Upper lobe of right lung (tissue), 1 donor: ENCODE measurements at regions of chr7 and their contacts with region 1.

Region 1: DNA sequence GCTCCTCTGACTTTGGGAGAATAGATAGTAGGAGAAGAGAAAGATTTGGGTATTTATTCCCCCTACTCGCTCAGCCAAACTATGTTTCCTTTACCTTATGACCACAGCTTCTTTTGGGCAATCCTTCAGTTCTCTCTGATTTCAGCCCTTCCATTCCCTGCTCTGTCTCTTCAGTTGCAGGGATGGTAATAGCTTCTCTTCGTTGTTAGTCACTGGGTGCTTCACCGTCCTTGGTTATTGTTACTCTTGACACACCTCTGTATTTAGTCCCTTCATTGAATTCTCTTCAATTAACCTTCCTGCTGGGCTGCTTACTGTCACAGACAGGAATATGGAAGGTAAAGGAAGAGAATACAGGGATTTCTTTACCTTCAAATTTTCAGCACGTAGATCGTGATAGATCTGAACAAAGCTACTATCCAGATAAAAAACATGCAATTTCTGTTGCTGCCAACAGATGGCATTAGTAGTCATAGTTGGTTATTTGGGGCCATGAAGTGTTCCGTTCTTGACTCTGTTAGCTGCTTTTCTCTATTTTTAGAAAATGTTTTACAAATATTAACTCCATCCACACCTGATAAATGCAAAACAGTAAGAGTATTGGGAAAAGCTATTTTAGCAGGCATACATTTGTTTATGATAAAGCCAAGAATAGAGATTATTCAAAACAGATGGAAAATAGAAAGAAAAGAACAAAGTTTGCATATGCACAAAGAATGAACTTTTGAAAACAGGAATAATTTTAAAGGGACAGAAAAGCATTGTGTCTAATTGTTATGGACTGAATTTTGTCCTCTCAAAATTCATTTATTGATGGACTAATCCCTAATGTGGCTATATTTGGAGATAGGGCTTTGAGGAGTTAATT is 14.0 kb upstream of the PTTG1IP2 start:
- DNase-seq: no peak
- ATAC-seq: peak; percentile 84
- H3K4me3 ChIP-seq: no peak overlapping the region
- H3K27ac ChIP-seq: no peak overlapping the region
- H3K4me1 ChIP-seq: no peaks in the 10 kb centered on the region
- H3K27me3 ChIP-seq: no peaks in the 10 kb centered on the region
- CTCF ChIP-seq: peak; percentile 68

Region 2: DNA sequence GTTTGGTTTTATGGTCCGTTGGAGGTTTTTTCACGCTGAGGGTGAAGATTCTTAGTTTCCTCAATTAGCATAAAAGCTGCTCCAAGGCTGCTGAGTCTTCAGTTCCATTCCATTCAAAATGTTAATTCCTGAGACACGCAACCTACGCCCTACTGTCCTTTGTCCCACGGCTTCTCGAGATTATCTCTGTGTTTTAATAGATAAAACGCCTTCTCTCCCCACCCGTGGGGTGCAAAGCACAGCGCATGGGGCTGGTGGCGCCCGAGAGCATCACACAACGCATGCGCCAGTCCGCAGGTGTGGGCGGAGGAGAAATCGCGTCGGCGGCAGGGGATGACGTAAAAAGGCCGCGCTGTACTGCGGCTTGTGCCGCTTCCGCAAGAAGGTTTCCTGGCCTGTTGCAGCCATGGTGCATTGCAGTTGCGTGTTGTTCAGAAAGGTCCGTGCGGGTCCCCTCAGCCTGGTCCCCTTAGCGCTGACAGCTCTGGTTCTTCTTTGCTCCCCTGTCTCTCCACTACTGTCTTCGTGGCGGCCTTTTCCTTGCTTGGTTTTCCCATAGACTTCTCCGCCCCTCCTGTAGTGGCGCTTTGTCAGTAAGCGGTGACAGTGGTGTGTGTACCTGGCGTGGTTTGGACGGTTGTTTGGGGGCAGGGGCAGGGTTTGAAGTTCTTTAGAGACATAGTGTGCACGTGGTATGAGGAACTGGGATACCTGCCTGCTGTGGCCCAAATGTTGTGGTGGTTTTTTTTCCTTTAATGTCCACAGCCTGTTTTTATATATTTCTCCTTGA is 108.9 kb before region 1 on chr7 and contains the start of gene GTPBP10:
- intact Hi-C with region 1: no loop called
- DNase-seq: peak; percentile 97
- ATAC-seq: peak; percentile 100
- H3K4me3 ChIP-seq: peak within 1 kb of the TSS; percentile 78
- H3K27ac ChIP-seq: peak within 1 kb of the TSS; percentile 93
- H3K4me1 ChIP-seq: peaks cover 9% of the 10 kb centered on the region
- H3K27me3 ChIP-seq: no peaks in the 10 kb centered on the region
- CTCF ChIP-seq: peak; percentile 80
- total RNA-seq, gene GTPBP10: 19.9 TPM

Region 3: DNA sequence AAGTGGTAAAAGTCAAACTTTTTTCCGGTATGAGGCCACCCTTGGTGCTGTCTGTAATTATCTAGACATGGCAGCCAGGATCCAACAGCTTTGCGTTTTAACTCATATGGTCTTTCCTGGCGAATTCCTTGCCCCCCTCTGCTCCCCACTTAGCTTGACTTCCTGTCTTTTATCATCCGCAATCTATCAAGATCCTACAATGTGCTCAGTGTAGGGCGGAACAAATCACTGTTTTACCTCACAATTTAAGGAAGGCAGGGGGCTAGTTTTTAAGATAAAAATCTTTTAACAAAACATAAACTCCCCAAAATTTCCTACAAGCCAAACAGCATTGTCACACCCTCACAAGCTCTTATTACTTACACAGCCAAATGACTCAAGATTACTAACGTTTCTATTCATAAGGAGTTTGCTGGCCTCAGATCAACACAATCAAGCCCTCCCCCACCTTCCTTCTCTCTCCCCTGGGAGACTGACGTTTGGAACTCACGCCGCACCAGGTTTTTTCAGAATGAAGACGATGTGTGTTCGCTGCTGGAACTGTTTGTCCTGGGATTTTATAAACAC is 139.4 kb after region 1 on chr7:
- intact Hi-C with region 1: no loop called
- DNase-seq: no peak
- ATAC-seq: no peak
- H3K4me3 ChIP-seq: peak overlapping the region; percentile 65
- H3K27ac ChIP-seq: no peak overlapping the region
- H3K4me1 ChIP-seq: peaks cover 11% of the 10 kb centered on the region
- H3K27me3 ChIP-seq: no peaks in the 10 kb centered on the region
- CTCF ChIP-seq: no peak

Region 4: GRCh38 chr7:90629297-90629918 is 174.0 kb after region 1 on chr7:
- intact Hi-C with region 1: loop called (anchors 5 kb)
- DNase-seq: no peak
- ATAC-seq: peak; percentile 92
- H3K4me3 ChIP-seq: no peak overlapping the region
- H3K27ac ChIP-seq: no peak overlapping the region
- H3K4me1 ChIP-seq: peaks cover 9% of the 10 kb centered on the region
- H3K27me3 ChIP-seq: no peaks in the 10 kb centered on the region
- CTCF ChIP-seq: peak; percentile 71